ENCODE measurements at regions of chr4 and their contacts with region 1.

Region 1: DNA sequence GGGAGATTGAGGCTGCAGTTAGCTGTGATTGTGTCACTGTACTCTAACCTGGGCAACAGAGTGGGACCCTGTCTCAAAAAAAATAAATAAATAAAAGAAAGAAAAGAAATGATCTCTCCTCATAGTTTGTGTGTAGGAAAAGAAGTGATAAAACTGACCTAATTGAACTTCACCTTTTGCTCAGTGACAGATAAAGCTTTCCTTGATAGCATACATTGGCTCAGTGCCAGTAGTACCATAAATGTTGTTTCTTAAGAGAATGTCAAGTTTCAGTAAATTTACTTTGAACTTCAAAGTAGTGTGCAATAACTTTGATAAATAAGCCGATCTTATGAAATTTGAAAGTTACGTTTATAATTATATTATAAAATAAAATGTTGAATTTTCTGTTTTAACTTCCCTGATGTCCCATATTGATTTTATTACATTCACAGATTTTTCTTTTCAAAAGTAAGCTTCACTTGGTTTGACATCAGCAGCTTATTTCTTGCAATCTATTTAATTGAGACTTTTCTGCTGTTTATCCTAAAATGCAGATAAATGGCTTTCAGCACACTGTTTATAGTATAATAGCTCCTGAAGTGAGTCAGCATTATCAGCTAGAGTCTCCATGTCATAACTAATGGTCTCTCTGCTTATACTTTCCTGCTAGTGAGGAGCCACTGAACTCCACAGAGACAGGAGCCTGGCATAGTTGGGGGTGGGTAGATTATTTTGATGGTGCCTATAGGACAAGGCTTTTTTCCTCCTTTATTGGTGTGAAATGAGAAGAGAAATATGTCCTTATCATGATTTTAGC is 330.1 kb downstream of the BMPR1B start:
- DNase-seq: no peak
- H3K4me3 ChIP-seq: no peak overlapping the region
- CTCF ChIP-seq: no peak

Region 2: GRCh38 chr4:94629837-94630236 is 458.0 kb before region 1 on chr4:
- in situ Hi-C with region 1: loop called (anchors 5 kb)
- DNase-seq: no peak
- H3K4me3 ChIP-seq: no peak overlapping the region
- CTCF ChIP-seq: no peak